ENCODE measurements at regions of chr1 and their contacts with region 1.

Region 1: DNA sequence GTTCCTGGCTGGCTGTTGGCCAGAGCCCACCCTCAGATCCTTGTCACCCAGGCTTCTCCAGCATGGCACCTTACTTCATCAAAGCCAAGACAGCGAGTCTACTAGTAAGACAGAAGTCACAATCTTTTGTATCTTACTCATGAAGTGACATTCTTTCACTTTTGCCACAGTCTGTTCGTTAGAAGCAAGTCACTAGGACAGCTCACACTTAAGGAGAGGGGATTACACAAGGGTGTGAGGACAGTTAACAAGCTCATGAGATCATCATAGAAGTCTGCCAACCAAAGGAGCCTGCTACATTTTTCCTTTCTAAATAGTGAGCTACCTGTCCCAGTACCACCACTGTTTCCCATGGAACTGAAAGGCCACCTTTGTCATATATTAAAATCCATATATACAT is 61.5 kb downstream of the PACC1 start:
- DNase-seq: no peak
- CTCF ChIP-seq: no peak

Region 2: DNA sequence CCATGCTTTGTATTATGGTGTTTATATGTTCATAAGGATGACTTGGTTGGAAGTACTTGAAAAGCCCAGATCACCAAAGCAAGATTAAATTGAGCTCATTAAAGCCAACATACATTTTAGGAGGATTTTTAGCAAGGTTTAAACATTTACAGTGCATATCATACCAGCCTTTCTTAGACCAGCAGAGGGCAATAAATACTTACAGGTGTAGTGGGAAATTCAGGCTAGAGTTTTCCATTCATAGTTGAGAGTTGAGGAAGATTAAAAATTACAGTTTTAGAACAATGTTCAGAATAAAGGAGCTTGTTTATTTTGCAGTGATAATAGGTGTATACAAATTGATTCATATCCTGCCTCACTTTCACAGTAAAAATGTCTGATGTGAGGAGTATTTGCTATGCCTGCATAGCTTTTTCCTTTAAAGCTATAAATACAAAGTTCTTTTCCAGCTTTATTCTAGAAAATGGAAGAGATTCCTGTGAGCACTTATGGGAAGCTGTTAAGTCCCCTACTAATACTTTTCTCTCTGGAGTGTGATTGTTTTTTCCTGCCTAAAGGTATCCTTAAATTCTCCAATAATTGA is 282.4 kb before region 1 on chr1:
- in situ Hi-C with region 1: loop called (anchors 10 kb)
- DNase-seq: peak; percentile 27
- CTCF ChIP-seq: peak; percentile 68

Region 3: DNA sequence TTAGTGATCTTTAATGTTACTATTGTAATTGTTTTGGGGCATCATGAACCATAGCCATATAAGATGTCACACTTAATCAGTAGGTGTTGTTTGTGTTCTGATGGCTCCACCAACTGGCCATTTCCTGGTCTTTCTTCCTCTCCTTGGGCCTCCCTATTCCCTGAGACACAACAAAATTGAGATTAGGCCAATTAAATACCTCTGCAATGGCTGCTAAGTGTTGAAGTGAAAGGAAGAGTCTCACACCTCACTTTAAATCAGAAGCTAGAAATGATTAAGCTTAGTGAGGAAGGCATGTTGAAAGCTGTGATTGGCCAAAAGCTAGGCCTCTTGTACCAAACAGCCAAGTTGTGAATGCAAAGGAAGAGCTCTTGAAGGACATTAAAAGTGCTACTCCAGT is 37.3 kb before region 1 on chr1:
- in situ Hi-C with region 1: no loop called
- DNase-seq: no peak
- CTCF ChIP-seq: peak; percentile 34

Region 4: DNA sequence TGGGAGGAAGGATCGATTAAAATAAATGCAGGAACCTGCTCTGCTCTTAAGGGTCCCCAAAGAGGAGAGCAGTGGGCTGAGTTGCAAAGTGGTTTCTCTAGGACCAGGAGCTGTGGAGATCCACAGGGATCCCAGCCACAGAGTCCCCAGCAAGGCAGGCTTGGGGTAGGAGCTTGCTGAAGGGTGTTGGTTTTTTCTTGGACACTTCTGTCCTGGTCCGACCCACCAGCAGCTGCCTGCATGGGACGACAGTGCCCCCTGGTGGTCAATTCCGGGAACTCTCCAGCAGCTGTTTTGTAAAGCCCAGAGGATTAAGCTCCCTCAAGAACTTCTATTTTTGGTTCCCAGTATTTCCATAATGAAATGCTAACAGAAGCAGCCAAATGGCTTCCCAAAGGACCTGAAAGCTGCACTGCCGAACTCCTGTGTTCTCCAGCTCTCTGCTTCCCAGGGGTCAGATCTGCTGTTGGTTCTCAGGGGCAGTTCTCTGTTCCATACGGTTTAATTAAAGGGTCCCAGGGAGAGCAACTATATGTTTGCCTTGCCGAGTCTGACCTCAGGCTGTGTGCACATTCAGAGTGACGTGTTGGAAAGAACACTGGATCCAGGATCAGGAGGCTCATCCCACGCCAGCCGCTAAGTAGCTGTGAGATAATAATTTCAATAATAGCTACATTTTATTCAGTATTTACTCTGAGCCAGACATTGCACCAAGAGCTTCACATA is 102.8 kb after region 1 on chr1:
- in situ Hi-C with region 1: no loop called
- DNase-seq: peak; percentile 83
- CTCF ChIP-seq: peak; percentile 92

Region 5: DNA sequence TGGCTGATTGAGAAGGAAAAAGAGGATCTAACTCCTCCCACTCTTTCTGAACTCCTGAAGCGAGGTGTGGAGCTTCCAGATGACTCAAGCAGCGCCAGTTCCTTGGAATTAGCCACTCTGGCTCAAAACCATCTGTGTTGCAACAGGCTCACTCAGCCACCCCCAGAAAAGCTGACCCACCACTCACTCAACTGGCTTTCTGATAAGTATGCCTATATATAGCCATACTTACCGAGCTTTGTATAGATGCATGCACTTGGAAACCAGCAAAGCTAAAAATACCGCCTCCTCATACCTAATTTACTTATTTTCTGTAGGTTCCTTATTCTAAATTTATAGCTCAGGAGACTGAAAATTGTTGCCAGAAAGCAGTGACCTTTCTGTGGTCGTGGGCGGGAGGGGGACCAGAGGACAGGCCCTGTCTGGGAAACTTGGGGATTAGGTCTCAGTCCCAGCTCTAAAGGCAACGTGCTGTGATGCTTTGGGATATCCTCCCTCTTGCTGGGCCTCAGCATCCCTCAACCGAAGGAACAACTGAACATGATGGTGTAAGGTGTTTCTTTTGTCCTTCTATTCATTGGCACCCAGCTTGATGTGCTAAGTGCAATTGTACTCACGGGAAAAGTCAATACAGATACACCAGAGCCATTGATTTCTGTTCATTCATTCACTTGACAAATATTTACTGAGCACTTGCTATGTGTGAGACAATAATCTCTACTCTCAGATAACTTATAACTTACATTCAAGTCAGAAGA is 145.3 kb after region 1 on chr1:
- in situ Hi-C with region 1: no loop called
- DNase-seq: no peak
- CTCF ChIP-seq: no peak